Tibial artery (tissue), 4 donors: ENCODE measurements at regions of chr1 and their contacts with region 1.

Region 1: DNA sequence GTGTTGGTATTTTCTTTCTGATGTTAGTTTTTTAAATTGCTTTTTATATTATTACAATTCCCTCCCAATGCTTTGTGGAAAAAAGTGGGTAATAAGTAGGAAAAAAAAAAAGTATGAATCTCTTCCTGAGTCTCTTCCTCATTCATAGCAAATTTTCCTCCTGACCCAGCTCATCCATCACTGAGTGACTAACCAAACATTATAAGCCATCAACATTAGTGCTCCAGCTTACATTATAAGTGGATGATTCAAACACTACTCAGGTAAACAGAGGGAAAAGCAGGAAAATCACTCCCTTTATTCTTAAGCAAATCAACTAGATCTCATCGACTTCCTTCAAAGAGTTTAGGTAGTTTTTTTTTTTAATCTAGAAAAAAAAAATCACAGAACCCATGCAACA is 15.4 kb upstream of the SAMD13 start:
- DNase-seq: no peak
- H3K4me3 ChIP-seq: no peak overlapping the region
- H3K27ac ChIP-seq: no peak overlapping the region
- H3K4me1 ChIP-seq: peaks cover 0 to 13% (median 0%) of the 10 kb centered on the region in 4 donors
- H3K27me3 ChIP-seq: no peaks in the 10 kb centered on the region
- CTCF ChIP-seq: no peak

Region 2: GRCh38 chr1:84319662-84320061 is 33.6 kb after region 1 on chr1:
- intact Hi-C with region 1: loop called (anchors 2 kb)
- DNase-seq: no peak
- H3K4me3 ChIP-seq: no peak overlapping the region
- H3K27ac ChIP-seq: no peak overlapping the region
- H3K4me1 ChIP-seq: no peaks in the 10 kb centered on the region
- H3K27me3 ChIP-seq: no peaks in the 10 kb centered on the region
- CTCF ChIP-seq: no peak